ENCODE measurements at regions of chr2 and their contacts with region 1.

Region 1: GRCh38 chr2:64988420-64989125 is 626 bp upstream of the SLC1A4 start:
- DNase-seq: peak; percentile 88
- H3K4me3 ChIP-seq: peak overlapping the region; percentile 52 to 92 (median 82)
- H3K27ac ChIP-seq: peak overlapping the region; percentile 92 to 100 (median 98)
- H3K4me1 ChIP-seq: peaks cover 0 to 32% (median 25%) of the 10 kb centered on the region in 4 donors
- H3K27me3 ChIP-seq: no peaks in the 10 kb centered on the region
- CTCF ChIP-seq: peak; percentile 36 to 68 (median 56)
- EP300 ChIP-seq: no peak
- POLR2A ChIP-seq: peak; percentile 36 to 51

Region 2: GRCh38 chr2:65040400-65041261 is 52.1 kb after region 1 on chr2:
- intact Hi-C with region 1: loop called (anchors 5 kb)
- DNase-seq: peak; percentile 93
- H3K4me3 ChIP-seq: peak overlapping the region in 1 of 4 donors; percentile 23
- H3K27ac ChIP-seq: no peak overlapping the region
- H3K4me1 ChIP-seq: peaks cover 0 to 4% (median 0%) of the 10 kb centered on the region in 4 donors
- H3K27me3 ChIP-seq: no peaks in the 10 kb centered on the region
- CTCF ChIP-seq: peak; percentile 87 to 98 (median 96)
- EP300 ChIP-seq: no peak
- POLR2A ChIP-seq: no peak

Region 3: DNA sequence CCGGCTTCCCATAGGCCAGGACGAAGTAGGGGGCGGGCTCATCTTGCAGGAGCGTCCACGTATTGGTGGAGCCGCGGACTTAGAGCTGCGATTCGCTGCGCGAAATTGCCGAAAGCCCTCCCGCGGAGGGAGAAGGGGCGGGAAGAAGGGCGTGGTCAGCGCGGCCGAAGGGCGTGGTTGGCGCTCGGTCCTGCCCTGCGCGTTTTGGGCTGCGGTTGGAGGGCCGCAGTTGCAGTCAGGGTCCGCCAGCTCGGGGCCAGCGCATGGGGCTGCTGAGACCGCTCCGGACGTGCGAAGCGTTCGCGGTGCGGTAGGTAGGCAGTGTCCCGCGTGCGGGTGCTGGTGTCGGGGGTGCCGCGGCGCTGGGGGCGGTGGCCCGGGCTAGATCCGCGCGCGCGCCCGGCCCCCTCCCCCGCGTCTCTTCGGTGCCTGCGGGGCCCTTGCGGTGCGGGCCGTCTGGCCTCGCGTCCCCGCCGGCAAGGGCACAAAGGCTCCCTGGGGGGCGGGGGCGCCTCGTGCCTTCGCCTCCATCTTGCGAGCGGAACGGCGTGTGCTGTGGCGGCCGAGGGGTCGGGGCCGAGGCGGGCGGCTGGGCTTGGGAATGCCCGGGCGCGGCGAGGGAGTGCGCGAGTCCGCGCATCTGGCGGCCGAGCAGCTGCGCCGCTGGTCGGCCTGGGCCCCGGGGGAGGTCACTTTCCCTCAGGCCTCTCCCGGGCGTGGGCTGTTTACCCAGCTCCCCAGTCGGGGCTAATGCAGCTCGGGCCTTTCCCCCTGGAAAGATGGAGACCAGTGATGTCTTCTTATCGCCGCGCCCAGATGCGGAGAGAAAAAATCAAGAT is 67.9 kb after region 1 on chr2 and contains the start of gene CEP68:
- intact Hi-C with region 1: loop called (anchors 5 kb)
- DNase-seq: peak; percentile 99
- H3K4me3 ChIP-seq: peak within 1 kb of the TSS; percentile 57 to 95 (median 88)
- H3K27ac ChIP-seq: peak within 1 kb of the TSS; percentile 93 to 96 (median 94)
- H3K4me1 ChIP-seq: peaks cover 0 to 52% (median 47%) of the 10 kb centered on the region in 4 donors
- H3K27me3 ChIP-seq: no peaks in the 10 kb centered on the region
- CTCF ChIP-seq: no peak
- EP300 ChIP-seq: no peak
- POLR2A ChIP-seq: peak; percentile 30 to 76
- total RNA-seq, gene CEP68: 24.4 to 32.1 (median 28.6) TPM

Measured in sigmoid colon (tissue), 7 donors.